ENCODE measurements at regions of chr16 and their contacts with region 1.

Region 1: GRCh38 chr16:49663081-49664065 is 192.5 kb downstream of the ZNF423 start:
- DNase-seq: no peak
- ATAC-seq: peak; percentile 51

Region 2: DNA sequence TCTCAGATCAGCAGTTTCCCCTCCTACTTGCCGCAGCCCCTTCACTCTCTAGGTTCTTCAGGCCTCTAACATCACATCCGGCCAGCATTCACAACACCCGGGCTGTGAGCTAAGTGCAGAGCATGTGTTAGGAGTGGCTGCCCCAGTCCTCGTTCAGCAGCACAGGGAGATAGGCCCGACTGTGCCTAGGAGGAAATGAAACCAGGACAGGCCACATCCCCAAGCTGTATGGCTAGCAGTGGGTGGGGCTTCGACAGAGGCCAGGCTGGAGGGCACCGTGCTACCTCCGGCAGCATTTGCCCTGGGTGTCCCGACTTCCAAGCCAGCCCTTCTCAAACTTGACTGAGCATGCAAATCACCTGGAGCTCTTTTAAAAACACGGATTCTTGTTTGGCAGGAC is 88.0 kb before region 1 on chr16:
- intact Hi-C with region 1: no loop called
- DNase-seq: peak; percentile 79
- ATAC-seq: peak; percentile 83

Region 3: GRCh38 chr16:49701789-49702494 is 38.6 kb after region 1 on chr16:
- intact Hi-C with region 1: loop called (anchors 5 kb)
- DNase-seq: peak; percentile 87
- ATAC-seq: peak; percentile 80

Region 4: GRCh38 chr16:49776085-49776595 is 112.8 kb after region 1 on chr16:
- intact Hi-C with region 1: no loop called
- DNase-seq: peak; percentile 73
- ATAC-seq: peak; percentile 45